Tibial artery (tissue), 4 donors: ENCODE measurements at regions of chr17 and their contacts with region 1.

Region 1: GRCh38 chr17:1716076-1716995 is 6.2 kb upstream of the TLCD2 start:
- DNase-seq: peak; percentile 99 to 100
- H3K4me3 ChIP-seq: peak overlapping the region; percentile 92 to 95
- H3K27ac ChIP-seq: peak overlapping the region; percentile 98 to 100
- H3K4me1 ChIP-seq: peaks cover 0 to 53% (median 42%) of the 10 kb centered on the region in 4 donors
- H3K27me3 ChIP-seq: no peaks in the 10 kb centered on the region
- CTCF ChIP-seq: no peak

Region 2: GRCh38 chr17:1566545-1567199 is 149.7 kb before region 1 on chr17:
- intact Hi-C with region 1: no loop called
- DNase-seq: no peak
- H3K4me3 ChIP-seq: no peak overlapping the region
- H3K27ac ChIP-seq: no peak overlapping the region
- H3K4me1 ChIP-seq: peaks cover 0 to 6% (median 1%) of the 10 kb centered on the region in 4 donors
- H3K27me3 ChIP-seq: peaks cover 0 to 10% of the 10 kb centered on the region in 2 donors
- CTCF ChIP-seq: no peak

Region 3: DNA sequence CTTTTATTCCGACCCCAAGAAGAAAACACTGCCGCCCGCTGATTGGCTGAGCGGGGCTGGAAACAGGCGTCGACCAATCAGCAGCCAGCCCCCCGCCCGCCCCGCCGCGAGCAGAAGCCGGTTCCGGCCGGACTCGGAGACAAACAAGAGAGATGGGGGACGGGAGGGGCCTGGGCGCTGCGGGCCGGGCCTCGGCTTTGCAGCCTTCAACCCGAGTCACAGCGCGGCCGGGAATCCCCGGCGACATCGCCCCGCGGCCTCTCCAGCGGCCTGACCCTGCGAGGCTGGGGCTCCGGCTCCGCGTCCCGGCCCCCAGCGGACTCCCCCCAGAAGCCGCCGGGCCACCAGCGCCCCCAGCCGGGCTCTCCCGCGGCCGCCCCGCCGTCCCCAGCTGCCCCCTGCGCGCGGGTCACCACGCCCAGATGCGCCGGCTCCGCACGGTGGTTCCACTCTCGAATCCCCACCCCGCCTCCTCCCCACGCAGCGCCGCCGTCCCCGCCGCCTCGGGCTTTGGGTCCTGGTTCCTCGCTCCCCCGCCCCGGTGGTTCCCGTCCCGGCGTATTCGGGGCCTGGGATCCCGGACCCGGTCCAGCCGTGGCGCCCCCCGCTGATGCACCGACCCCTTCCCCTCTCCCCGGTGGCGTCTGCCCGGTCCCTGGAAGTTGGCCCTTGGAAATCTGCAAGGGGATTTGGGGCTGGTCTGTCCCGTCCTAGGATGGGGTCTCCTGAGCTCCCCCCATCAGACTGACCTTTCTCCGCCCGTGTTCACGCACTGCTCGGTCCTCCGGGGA is 87.3 kb before region 1 on chr17:
- intact Hi-C with region 1: no loop called
- DNase-seq: peak; percentile 96 to 97
- H3K4me3 ChIP-seq: peak overlapping the region; percentile 64 to 79
- H3K27ac ChIP-seq: peak overlapping the region; percentile 85 to 87
- H3K4me1 ChIP-seq: peaks cover 0 to 31% (median 24%) of the 10 kb centered on the region in 4 donors
- H3K27me3 ChIP-seq: no peaks in the 10 kb centered on the region
- CTCF ChIP-seq: peak; percentile 36 to 49

Region 4: DNA sequence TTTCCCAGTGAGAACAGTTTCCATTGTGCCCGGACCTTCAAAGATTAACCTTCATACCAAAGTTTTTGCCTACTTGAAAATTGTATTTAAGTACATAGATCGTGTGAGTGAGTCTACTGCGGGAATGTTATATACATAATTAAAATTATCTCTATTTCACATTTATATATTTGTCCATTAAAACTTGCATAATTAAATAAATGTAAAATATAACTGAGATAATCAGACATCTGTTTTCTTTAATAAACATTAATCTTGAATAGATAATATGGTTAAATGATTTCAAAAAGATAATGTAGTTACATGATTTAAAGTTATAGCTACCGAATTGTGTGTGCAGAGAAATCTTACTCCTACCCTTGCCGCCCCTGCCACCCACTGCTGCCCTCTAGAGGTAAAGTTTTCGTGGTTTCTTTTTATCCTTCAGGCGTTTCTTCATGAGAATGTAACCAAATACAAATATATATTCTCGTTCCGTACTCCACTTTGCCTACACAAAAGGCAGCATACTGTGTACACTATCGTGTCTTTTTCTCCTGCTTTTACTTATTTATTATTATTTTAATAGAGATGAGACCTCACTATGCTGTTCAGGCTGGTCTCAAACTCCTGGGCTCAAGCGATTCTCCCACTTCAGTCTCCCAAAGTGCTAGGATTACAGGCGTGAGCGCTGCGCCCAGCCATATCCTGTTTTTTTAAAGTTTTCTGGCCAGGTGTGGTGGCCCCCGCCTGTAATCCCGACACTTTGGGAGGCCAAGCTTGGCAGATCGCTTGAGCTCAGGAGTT is 149.1 kb after region 1 on chr17:
- intact Hi-C with region 1: loop called (anchors 5 kb)
- DNase-seq: no peak
- H3K4me3 ChIP-seq: no peak overlapping the region
- H3K27ac ChIP-seq: no peak overlapping the region
- H3K4me1 ChIP-seq: no peaks in the 10 kb centered on the region
- H3K27me3 ChIP-seq: no peaks in the 10 kb centered on the region
- CTCF ChIP-seq: peak; percentile 41 to 63